ENCODE measurements at regions of chr5 and their contacts with region 1.

Region 1: DNA sequence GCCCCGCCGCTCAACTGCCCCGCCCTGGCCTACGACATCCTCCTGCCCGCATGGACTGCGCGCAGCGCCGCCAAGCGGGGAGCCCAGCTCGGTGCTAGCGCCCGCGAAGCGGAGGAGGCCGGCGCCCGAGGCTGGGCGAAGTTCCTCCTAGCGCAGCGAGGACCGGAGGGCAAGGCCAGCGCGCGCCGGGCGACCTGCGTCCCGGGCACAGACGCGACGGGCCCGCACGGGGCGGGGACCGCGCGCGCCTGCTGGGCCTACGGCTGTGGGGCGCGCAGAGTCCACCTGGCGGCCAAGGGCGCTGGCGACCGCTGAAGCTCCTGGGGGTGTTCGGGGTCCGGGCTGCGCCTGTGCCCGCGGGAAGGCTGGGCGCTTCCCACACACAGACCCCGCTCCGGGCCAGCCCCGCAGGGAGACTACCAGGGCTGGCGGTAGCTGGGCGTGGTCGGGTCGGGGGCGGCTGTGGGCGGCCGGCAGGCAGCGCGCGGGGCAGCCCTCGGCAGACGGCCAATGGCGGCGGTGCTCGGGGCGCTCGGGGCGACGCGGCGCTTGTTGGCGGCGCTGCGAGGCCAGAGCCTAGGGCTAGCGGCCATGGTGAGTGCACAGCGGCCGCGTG is at the start of gene PCBD2:
- DNase-seq: peak; percentile 94
- H3K4me3 Mint-ChIP-seq: peak within 1 kb of the TSS; percentile 96
- H3K27ac Mint-ChIP-seq: peak within 1 kb of the TSS; percentile 94
- H3K4me1 Mint-ChIP-seq: no peaks in the 10 kb centered on the region
- H3K27me3 Mint-ChIP-seq: no peaks in the 10 kb centered on the region
- CTCF ChIP-seq: peak; percentile 95
- total RNA-seq, gene PCBD2: 27.3 and 34.5 TPM in 2 replicates

Region 2: GRCh38 chr5:134586866-134587524 is 317.7 kb before region 1 on chr5:
- CTCF ChIA-PET with region 1: interaction called, 3 read pairs
- POLR2A ChIA-PET with region 1: no interaction called
- intact Hi-C with region 1: loop called (anchors 1 kb)
- DNase-seq: peak; percentile 88
- H3K4me3 Mint-ChIP-seq: no peak overlapping the region
- H3K27ac Mint-ChIP-seq: no peak overlapping the region
- H3K4me1 Mint-ChIP-seq: peaks cover 18% of the 10 kb centered on the region
- H3K27me3 Mint-ChIP-seq: no peaks in the 10 kb centered on the region
- CTCF ChIP-seq: peak; percentile 89

Region 3: GRCh38 chr5:134803821-134804220 is 100.9 kb before region 1 on chr5:
- CTCF ChIA-PET with region 1: interaction called, 3 read pairs
- POLR2A ChIA-PET with region 1: no interaction called
- intact Hi-C with region 1: loop called (anchors 1 kb)
- DNase-seq: no peak
- H3K4me3 Mint-ChIP-seq: no peak overlapping the region
- H3K27ac Mint-ChIP-seq: peak overlapping the region; percentile 60
- H3K4me1 Mint-ChIP-seq: peaks cover 6% of the 10 kb centered on the region
- H3K27me3 Mint-ChIP-seq: no peaks in the 10 kb centered on the region
- CTCF ChIP-seq: no peak

Region 4: GRCh38 chr5:134851307-134851923 is 53.3 kb before region 1 on chr5:
- CTCF ChIA-PET with region 1: interaction called, 6 read pairs
- POLR2A ChIA-PET with region 1: interaction called, 12 read pairs
- intact Hi-C with region 1: loop called (anchors 2 kb)
- DNase-seq: peak; percentile 81
- H3K4me3 Mint-ChIP-seq: no peak overlapping the region
- H3K27ac Mint-ChIP-seq: peak overlapping the region; percentile 18
- H3K4me1 Mint-ChIP-seq: peaks cover 7% of the 10 kb centered on the region
- H3K27me3 Mint-ChIP-seq: no peaks in the 10 kb centered on the region
- CTCF ChIP-seq: peak; percentile 58

Region 5: GRCh38 chr5:134887593-134888159 is 17.1 kb before region 1 on chr5:
- CTCF ChIA-PET with region 1: interaction called, 30 read pairs
- POLR2A ChIA-PET with region 1: interaction called, 6 read pairs
- intact Hi-C with region 1: no loop called
- DNase-seq: no peak
- H3K4me3 Mint-ChIP-seq: no peak overlapping the region
- H3K27ac Mint-ChIP-seq: no peak overlapping the region
- H3K4me1 Mint-ChIP-seq: no peaks in the 10 kb centered on the region
- H3K27me3 Mint-ChIP-seq: no peaks in the 10 kb centered on the region
- CTCF ChIP-seq: no peak

Region 6: DNA sequence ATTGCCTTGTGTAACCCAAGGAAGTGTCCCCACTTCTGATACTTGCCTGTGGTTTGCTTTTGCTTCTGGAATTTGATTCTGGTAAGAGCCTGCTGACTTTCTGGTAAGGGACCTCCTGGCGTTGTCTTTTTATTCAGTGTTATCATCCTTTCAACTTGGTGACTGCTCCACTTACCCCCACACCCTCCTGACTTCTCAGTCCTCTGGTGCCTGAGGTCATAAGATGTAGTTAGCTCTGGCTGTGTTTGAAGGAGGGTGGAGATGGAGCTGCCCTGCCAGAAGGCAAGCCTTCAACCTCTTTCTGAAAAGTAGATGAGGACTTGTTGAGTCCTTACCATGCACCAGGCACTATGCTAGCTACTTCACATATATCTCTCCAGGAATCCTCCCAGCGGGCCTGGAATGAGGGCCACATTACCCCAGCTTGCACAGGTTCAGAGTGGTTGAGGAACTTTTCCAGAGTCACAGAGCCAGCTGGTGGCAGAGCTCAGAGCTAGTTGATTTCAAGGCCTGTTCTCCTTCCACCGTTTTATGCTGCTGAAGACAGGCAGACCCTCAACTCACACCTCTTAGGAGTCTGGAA is 174.5 kb after region 1 on chr5:
- CTCF ChIA-PET with region 1: no interaction called
- POLR2A ChIA-PET with region 1: no interaction called
- intact Hi-C with region 1: no loop called
- DNase-seq: no peak
- H3K4me3 Mint-ChIP-seq: no peak overlapping the region
- H3K27ac Mint-ChIP-seq: no peak overlapping the region
- H3K4me1 Mint-ChIP-seq: no peaks in the 10 kb centered on the region
- H3K27me3 Mint-ChIP-seq: no peaks in the 10 kb centered on the region
- CTCF ChIP-seq: no peak

Region 7: DNA sequence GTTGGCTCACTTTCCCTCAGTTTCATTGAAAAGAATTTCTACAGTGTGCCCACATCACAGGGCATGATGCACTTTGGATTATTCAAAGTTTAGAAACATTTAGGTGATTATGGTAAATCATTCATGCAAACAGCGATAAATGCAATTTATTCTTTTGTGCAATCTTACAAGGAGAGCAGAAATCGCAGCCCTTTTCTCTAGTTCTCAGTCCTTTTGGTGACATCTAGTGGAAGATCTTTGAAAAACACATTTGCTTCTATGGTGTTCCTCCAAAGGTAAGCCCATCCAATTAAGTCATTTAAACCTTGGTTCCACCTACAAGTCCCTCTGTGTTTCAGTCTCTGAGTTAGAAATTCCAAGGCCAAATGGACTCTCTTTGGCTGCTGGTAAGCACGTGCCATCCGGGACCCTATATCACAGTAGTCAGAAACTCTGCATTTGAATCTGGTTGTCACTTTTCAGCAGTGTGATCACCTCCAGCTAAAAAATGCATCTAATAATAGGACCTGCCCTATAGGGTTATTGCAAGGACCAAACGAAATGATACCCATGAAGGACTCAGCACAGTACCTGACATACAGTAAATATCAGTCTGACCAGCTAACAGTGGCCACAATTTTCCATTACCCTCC is 427.9 kb after region 1 on chr5:
- CTCF ChIA-PET with region 1: interaction called, 10 read pairs
- POLR2A ChIA-PET with region 1: interaction called, 3 read pairs
- intact Hi-C with region 1: loop called (anchors 1 kb)
- DNase-seq: peak; percentile 80
- H3K4me3 Mint-ChIP-seq: no peak overlapping the region
- H3K27ac Mint-ChIP-seq: no peak overlapping the region
- H3K4me1 Mint-ChIP-seq: peaks cover 14% of the 10 kb centered on the region
- H3K27me3 Mint-ChIP-seq: no peaks in the 10 kb centered on the region
- CTCF ChIP-seq: peak; percentile 75

Measured in MCF 10A (cell line).